ENCODE measurements at regions of chr16 and their contacts with region 1.

Region 1: DNA sequence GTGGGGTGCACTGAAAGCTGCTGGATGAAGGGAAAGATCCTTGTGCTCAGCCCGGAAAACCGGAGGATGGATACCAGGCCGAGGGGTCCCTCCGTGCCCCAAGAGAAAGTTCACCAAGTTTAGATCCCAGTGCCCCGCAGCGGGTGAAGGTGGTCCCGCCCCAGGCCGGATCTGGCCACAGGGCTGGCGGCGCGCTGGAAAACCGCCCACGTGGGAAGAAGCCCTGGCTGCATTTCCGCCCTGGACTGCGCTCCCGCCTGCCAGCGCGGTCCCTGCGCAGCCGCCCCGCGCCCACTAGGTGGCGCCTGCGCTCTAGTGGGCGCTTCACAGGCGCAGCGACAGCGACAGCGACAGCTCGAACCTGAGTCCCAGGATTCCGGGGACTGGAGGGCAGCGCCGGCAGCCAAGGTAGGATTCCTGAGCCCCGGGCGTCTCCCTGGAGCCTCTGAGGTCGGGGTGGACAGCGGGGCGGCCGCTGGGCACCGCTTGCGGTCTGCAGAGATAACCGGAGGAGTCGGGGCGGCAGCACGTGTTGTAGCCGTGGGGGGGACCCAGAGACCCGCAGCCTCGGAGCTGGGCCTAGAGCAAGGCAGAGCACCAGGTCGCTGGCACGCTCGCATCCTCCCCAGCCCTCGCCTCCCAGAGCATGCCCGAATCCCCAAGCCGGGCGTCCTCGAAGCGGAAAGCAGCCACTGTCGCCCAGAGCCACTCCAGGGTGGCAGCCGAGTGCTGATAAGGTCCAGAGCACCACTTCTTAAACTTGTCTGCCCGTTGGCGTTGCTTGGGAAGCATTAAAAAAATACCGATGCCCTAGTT is at the start of gene CHD9:
- DNase-seq: peak; percentile 83 to 91
- ATAC-seq: peak; percentile 70 to 89
- H3K4me3 ChIP-seq: peak within 1 kb of the TSS; percentile 53
- H3K27ac ChIP-seq: peak within 1 kb of the TSS; percentile 96 to 98
- H3K4me1 ChIP-seq: peaks cover 50% of the 10 kb centered on the region
- CTCF ChIP-seq: peak; percentile 98
- EP300 ChIP-seq: no peak
- POLR2A ChIP-seq: peak; percentile 30; the same call in 1 of the 2 replicates
- RAD21 ChIP-seq: peak; percentile 85 to 99
- polyA plus RNA-seq, gene CHD9: 44.9 and 51.6 TPM in 2 replicates

Region 2: GRCh38 chr16:52799149-52799548 is 255.7 kb before region 1 on chr16:
- CTCF ChIA-PET with region 1: no interaction called
- POLR2A ChIA-PET with region 1: no interaction called
- DNase-seq: no peak
- ATAC-seq: no peak
- H3K4me3 ChIP-seq: no peak overlapping the region
- H3K27ac ChIP-seq: no peak overlapping the region
- H3K4me1 ChIP-seq: no peaks in the 10 kb centered on the region
- CTCF ChIP-seq: no peak
- EP300 ChIP-seq: no peak
- POLR2A ChIP-seq: no peak
- RAD21 ChIP-seq: no peak

Region 3: DNA sequence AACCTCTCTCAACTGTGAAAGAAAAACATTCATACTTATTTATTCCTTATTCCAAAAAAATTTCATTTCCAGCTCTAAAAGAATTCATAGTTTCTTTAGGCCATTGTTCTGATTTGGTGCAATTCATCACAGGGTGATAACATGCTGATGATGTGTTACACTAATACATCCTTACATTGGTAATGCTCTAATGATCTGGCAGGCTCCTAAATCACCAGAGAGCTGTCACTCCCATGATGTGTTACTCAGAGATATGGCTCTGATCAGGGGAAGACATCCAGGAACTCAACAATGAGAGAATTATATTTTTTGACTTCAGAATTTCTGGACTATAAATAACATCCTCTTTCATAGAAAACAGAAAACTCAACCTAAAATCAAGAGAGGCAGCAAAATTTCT is 211.5 kb before region 1 on chr16:
- CTCF ChIA-PET with region 1: no interaction called
- POLR2A ChIA-PET with region 1: no interaction called
- DNase-seq: no peak
- ATAC-seq: no peak
- H3K4me3 ChIP-seq: no peak overlapping the region
- H3K27ac ChIP-seq: no peak overlapping the region
- H3K4me1 ChIP-seq: no peaks in the 10 kb centered on the region
- CTCF ChIP-seq: no peak
- EP300 ChIP-seq: no peak
- POLR2A ChIP-seq: no peak
- RAD21 ChIP-seq: no peak

Region 4: DNA sequence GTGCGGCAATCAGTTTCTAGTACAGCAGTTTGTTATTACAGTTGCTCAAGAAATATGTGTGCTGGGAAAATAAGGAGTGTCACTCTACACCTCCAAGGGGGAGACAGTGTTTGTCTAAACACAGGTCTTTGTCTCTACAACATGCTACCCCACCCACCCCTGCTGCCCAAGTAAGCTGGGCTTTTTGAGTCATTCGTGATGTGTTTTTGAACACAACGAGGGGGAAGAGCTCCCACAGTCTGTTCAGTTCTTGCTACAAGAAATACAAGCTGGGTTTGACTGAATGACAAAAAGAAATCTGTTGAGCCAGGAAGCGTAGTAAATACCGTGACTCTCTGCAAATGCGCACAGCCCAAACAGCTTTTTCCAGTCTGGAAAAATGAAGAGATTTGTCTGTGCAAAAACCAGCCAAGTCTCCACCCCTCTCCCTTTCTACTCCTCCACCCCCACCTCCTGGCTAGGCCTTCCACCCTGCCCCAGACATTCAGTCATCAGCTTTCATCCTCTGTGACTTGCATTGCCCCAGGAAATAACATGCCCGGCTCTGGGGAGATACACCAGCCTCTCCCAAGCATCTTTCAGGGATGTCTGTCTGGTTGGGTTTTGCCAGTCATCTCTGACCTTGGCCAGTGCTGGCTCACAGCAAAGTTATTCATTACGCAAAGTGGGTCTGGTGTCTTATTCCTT is 25.6 kb after region 1 on chr16:
- CTCF ChIA-PET with region 1: interaction called, 39 read pairs
- POLR2A ChIA-PET with region 1: interaction called, 12 read pairs
- DNase-seq: peak; percentile 89 to 92
- ATAC-seq: peak; percentile 95 to 96
- H3K4me3 ChIP-seq: peak overlapping the region; percentile 3; the same call in 2 of the 3 replicates
- H3K27ac ChIP-seq: peak overlapping the region; percentile 75 to 87
- H3K4me1 ChIP-seq: peaks cover 75% of the 10 kb centered on the region
- CTCF ChIP-seq: no peak
- EP300 ChIP-seq: peak; percentile 58 to 70; a peak in 3 of 5 replicates
- POLR2A ChIP-seq: no peak
- RAD21 ChIP-seq: peak in 1 of 2 experiments; percentile 39; a peak in 3 of 5 replicates

Region 5: DNA sequence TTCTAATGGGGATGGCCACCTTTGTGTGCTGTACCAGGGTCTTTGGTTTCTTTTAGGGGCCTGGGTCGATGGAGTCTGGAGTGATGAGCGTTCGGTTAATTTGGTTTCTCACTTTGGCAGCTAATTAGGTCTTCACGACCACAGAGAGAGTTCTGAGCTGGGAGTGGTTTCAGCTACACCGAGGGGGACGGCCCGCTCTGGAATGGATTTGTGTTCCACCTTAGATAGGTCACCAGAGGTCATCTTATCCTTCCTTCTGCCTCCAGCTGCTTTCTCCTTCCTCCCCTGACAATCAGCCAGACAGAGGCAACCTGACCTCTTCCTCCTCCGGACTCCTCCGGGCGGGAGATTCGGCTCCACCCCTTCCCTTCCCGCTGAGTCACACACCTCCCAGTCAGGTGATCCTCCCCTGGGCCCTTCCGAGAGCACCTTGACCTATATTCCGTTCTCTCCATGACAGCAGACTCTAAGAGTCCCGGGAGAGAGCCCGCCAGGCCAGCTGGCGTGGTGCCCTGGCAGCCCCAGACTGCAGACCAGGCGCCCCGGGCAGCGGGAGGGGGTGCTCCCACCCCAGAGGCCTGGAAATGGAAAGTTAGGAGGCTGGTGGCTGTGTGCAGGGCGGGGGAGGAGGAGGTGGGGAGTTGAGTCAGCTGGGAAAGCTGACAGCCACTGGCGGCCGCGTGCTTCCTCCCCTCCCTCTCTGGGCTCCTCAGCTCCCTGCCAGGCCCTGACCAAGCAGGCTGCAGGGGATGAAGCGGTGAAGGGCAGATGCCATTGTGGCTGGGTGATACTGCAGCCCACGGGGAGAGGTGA is 44.6 kb after region 1 on chr16:
- CTCF ChIA-PET with region 1: interaction called, 49 read pairs
- POLR2A ChIA-PET with region 1: interaction called, 21 read pairs
- DNase-seq: peak; percentile 86 to 95
- ATAC-seq: peak; percentile 92 to 94
- H3K4me3 ChIP-seq: peak overlapping the region; percentile 31
- H3K27ac ChIP-seq: peak overlapping the region; percentile 95 to 96
- H3K4me1 ChIP-seq: peaks cover 49% of the 10 kb centered on the region
- CTCF ChIP-seq: no peak
- EP300 ChIP-seq: peak; percentile 46 to 65; a peak in 2 of 5 replicates
- POLR2A ChIP-seq: no peak
- RAD21 ChIP-seq: peak in 1 of 2 experiments; percentile 45; a peak in 2 of 5 replicates

Region 6: GRCh38 chr16:53159781-53160436 is 105.0 kb after region 1 on chr16:
- CTCF ChIA-PET with region 1: interaction called, 21 read pairs
- POLR2A ChIA-PET with region 1: no interaction called
- DNase-seq: peak; percentile 46 to 63
- ATAC-seq: peak; percentile 76 to 88
- H3K4me3 ChIP-seq: no peak overlapping the region
- H3K27ac ChIP-seq: no peak overlapping the region
- H3K4me1 ChIP-seq: no peaks in the 10 kb centered on the region
- CTCF ChIP-seq: peak; percentile 70
- EP300 ChIP-seq: no peak
- POLR2A ChIP-seq: no peak
- RAD21 ChIP-seq: peak; percentile 59 to 65

Region 7: GRCh38 chr16:53207810-53208752 is 153.2 kb after region 1 on chr16:
- CTCF ChIA-PET with region 1: interaction called, 34 read pairs
- POLR2A ChIA-PET with region 1: interaction called, 10 read pairs
- DNase-seq: peak; percentile 84 to 92
- ATAC-seq: peak; percentile 99
- H3K4me3 ChIP-seq: peak overlapping the region; percentile 52
- H3K27ac ChIP-seq: peak overlapping the region; percentile 85 to 89
- H3K4me1 ChIP-seq: peaks cover 36% of the 10 kb centered on the region
- CTCF ChIP-seq: peak; percentile 81
- EP300 ChIP-seq: no peak
- POLR2A ChIP-seq: peak; percentile 33; the same call in 1 of the 2 replicates
- RAD21 ChIP-seq: peak; percentile 60 to 71